Psoas muscle (tissue), 8 donors: ENCODE measurements at regions of chr3 and their contacts with region 1.

Region 1: GRCh38 chr3:98593046-98593936 is at the start of gene CPOX:
- DNase-seq: peak; percentile 89 to 92
- ATAC-seq: peak; percentile 92 to 99 (median 98)
- H3K4me3 ChIP-seq: peak within 1 kb of the TSS; percentile 91
- H3K27ac ChIP-seq: peak within 1 kb of the TSS; percentile 66
- H3K4me1 ChIP-seq: peaks cover 7% of the 10 kb centered on the region
- H3K27me3 ChIP-seq: no peaks in the 10 kb centered on the region
- CTCF ChIP-seq: no peak
- total RNA-seq, gene CPOX: 6.1 to 9.4 (median 7.0) TPM

Region 2: GRCh38 chr3:98525494-98525893 is 67.8 kb before region 1 on chr3:
- intact Hi-C with region 1: loop called in 1 of 2 experiments (anchors 5 kb)
- DNase-seq: no peak
- ATAC-seq: no peak
- H3K4me3 ChIP-seq: no peak overlapping the region
- H3K27ac ChIP-seq: no peak overlapping the region
- H3K4me1 ChIP-seq: peaks cover 22% of the 10 kb centered on the region
- H3K27me3 ChIP-seq: no peaks in the 10 kb centered on the region
- CTCF ChIP-seq: no peak

Region 3: DNA sequence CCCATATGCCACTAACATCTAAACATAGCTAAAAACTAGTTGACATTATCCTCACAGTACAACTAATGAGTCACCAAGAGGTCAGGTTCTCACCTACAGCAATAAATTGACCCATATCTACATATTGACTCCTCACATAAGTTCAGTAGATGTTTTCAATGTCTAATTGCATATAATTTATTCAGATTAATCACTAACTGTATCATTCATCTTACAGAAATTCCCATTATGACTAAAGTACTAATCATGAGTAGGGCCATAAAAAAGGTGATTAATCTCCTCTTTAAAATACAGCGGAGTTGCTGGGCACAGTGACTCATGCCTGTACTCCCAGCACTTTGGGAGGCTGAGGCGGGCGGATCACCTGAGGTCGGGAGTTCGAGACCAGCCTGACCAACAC is 87.4 kb after region 1 on chr3:
- intact Hi-C with region 1: no loop called
- DNase-seq: no peak
- ATAC-seq: no peak
- H3K4me3 ChIP-seq: no peak overlapping the region
- H3K27ac ChIP-seq: no peak overlapping the region
- H3K4me1 ChIP-seq: no peaks in the 10 kb centered on the region
- H3K27me3 ChIP-seq: no peaks in the 10 kb centered on the region
- CTCF ChIP-seq: no peak

Region 4: GRCh38 chr3:98817547-98818041 is 224.3 kb after region 1 on chr3:
- intact Hi-C with region 1: no loop called
- DNase-seq: no peak
- ATAC-seq: peak; percentile 73 to 89 (median 74)
- H3K4me3 ChIP-seq: no peak overlapping the region
- H3K27ac ChIP-seq: no peak overlapping the region
- H3K4me1 ChIP-seq: no peaks in the 10 kb centered on the region
- H3K27me3 ChIP-seq: no peaks in the 10 kb centered on the region
- CTCF ChIP-seq: peak; percentile 83

Region 5: DNA sequence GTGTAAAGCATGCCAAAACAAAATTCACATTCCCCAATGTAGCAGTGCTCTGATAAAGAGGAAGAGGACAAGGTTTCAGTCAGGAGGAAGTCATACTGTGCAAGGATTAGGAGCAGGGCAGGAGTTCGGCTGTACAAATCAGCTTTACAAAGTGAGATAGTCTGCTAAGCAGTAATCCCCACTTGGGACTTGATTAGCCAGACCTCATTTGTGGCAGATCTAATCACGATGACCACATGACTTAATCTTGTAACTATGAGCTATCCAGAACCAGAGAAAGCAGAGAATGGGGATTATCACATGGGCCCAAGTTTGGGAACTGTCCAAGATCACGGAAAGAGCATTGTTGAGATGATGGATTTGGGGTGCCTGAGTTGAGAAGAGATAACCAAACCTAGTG is 300.4 kb after region 1 on chr3:
- intact Hi-C with region 1: loop called in 1 of 2 experiments (anchors 10 kb)
- DNase-seq: no peak
- ATAC-seq: no peak
- H3K4me3 ChIP-seq: no peak overlapping the region
- H3K27ac ChIP-seq: no peak overlapping the region
- H3K4me1 ChIP-seq: peaks cover 17% of the 10 kb centered on the region
- H3K27me3 ChIP-seq: no peaks in the 10 kb centered on the region
- CTCF ChIP-seq: no peak